ENCODE measurements at regions of chr6 and their contacts with region 1.

Region 1: GRCh38 chr6:32894080-32895005 is 40.4 kb downstream of the PSMB9 start:
- DNase-seq: peak; percentile 98
- ATAC-seq: peak; percentile 98
- H3K4me3 ChIP-seq: peak overlapping the region; percentile 84 to 96 (median 92)
- H3K4me3 Mint-ChIP-seq: peak overlapping the region; percentile 99
- H3K27ac ChIP-seq: peak overlapping the region; percentile 89 to 90
- H3K27ac Mint-ChIP-seq: peak overlapping the region; percentile 98
- H3K4me1 ChIP-seq: peaks cover 40 to 42% of the 10 kb centered on the region in 2 donors
- H3K4me1 Mint-ChIP-seq: peaks cover 60% of the 10 kb centered on the region
- H3K27me3 ChIP-seq: no peaks in the 10 kb centered on the region
- H3K27me3 Mint-ChIP-seq: no peaks in the 10 kb centered on the region
- CTCF ChIP-seq: no peak

Region 2: GRCh38 chr6:32576250-32576649 is 318.1 kb before region 1 on chr6:
- CTCF ChIA-PET with region 1: no interaction called
- POLR2A ChIA-PET with region 1: no interaction called
- intact Hi-C with region 1: no loop called
- DNase-seq: no peak
- ATAC-seq: no peak
- H3K4me3 ChIP-seq: no peak overlapping the region
- H3K4me3 Mint-ChIP-seq: no peak overlapping the region
- H3K27ac ChIP-seq: no peak overlapping the region
- H3K27ac Mint-ChIP-seq: peak overlapping the region; percentile 81
- H3K4me1 ChIP-seq: peaks cover 0 to 5% of the 10 kb centered on the region in 2 donors
- H3K4me1 Mint-ChIP-seq: peaks cover 23% of the 10 kb centered on the region
- H3K27me3 ChIP-seq: no peaks in the 10 kb centered on the region
- H3K27me3 Mint-ChIP-seq: no peaks in the 10 kb centered on the region
- CTCF ChIP-seq: no peak

Region 3: DNA sequence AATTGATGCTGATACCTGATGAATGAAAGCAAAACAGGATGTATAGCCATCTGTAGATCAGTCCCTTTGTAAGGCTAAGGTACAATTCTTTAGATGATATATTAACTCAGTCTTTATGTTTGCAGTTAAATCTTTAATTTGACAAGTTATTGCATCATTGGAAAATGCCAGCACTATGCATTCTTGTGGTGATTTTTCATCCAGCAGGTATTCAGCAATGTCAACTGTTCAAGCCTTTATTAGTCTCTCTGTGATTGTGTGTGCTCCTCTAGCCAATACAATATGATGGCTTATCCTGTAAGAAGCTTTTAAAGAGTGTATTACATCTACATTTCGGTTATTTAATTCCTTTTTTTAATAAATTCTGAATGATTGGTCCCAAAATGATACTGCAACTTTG is 12.2 kb after region 1 on chr6:
- CTCF ChIA-PET with region 1: interaction called, 10 read pairs
- POLR2A ChIA-PET with region 1: no interaction called
- intact Hi-C with region 1: no loop called
- DNase-seq: no peak
- ATAC-seq: no peak
- H3K4me3 ChIP-seq: no peak overlapping the region
- H3K4me3 Mint-ChIP-seq: no peak overlapping the region
- H3K27ac ChIP-seq: no peak overlapping the region
- H3K27ac Mint-ChIP-seq: no peak overlapping the region
- H3K4me1 ChIP-seq: peaks cover 0 to 6% of the 10 kb centered on the region in 2 donors
- H3K4me1 Mint-ChIP-seq: peaks cover 12% of the 10 kb centered on the region
- H3K27me3 ChIP-seq: no peaks in the 10 kb centered on the region
- H3K27me3 Mint-ChIP-seq: no peaks in the 10 kb centered on the region
- CTCF ChIP-seq: no peak

Region 4: DNA sequence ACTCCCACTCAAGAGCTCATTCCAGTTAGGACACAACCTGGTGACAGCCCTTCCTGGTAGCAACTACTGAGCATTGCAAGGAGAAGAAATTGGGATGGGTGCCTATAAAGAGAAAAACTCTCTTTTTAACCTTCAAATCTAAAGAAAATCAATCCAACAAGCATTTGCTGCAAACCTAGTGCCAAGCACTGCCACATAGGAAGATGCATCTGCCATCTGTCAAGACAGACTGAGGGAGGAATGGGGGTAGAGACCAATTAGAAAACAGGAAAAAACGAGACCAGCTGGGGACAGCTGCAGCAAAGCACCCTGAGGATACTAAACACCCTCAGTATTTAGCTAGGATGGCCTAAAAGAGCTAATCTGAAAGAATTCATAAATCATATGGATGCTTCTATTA is 18.6 kb after region 1 on chr6:
- CTCF ChIA-PET with region 1: interaction called, 6 read pairs
- POLR2A ChIA-PET with region 1: interaction called, 11 read pairs
- intact Hi-C with region 1: no loop called
- DNase-seq: no peak
- ATAC-seq: no peak
- H3K4me3 ChIP-seq: no peak overlapping the region
- H3K4me3 Mint-ChIP-seq: no peak overlapping the region
- H3K27ac ChIP-seq: no peak overlapping the region
- H3K27ac Mint-ChIP-seq: no peak overlapping the region
- H3K4me1 ChIP-seq: peaks cover 7 to 22% of the 10 kb centered on the region in 2 donors
- H3K4me1 Mint-ChIP-seq: peaks cover 26% of the 10 kb centered on the region
- H3K27me3 ChIP-seq: no peaks in the 10 kb centered on the region
- H3K27me3 Mint-ChIP-seq: no peaks in the 10 kb centered on the region
- CTCF ChIP-seq: no peak

Region 5: DNA sequence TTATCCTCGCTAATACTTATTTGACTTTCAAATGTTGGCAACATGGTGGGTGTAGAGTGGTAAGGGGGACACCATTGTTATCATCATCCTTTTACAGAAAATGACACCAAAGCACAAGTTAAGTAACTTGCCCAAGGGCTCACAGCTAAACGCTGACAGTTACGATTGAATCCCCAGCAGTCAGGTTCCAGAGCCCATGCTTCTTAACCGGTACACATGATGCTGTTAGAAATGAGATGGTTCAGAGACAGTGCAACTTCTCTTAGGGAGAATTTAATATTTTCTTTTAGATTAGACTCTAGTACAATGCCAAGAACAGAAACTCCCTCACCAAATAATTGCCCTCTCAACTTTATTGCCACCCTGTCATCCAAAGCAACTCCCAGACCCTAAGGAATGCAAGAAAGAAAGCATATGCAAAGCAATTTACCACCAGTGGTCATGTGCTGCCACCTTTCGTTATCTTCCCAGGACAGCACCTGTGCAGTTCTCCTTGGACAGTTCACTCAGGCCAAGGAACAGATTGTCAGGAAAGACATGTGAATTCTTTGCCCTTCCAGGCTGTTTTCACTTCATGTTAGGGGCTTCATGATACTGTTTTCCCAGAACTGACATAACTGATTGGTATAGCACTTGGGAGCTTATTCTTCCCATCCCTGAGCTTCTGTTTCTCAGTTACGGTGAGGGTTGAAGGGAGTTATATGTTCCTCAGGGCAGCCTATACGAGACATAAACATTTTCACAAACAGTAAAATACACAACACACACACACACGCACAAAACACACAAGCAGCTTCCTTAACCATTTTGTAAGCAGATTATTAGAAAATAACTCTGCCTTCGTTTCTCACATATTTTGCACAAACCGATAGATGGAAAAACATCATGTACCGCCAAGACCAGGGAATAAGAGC is 53.5 kb after region 1 on chr6:
- CTCF ChIA-PET with region 1: interaction called, 23 read pairs
- POLR2A ChIA-PET with region 1: interaction called, 40 read pairs
- intact Hi-C with region 1: loop called (anchors 1 kb)
- DNase-seq: peak; percentile 76
- ATAC-seq: no peak
- H3K4me3 ChIP-seq: peak overlapping the region in 3 of 5 experiments; percentile 2 to 35 (median 6)
- H3K4me3 Mint-ChIP-seq: peak overlapping the region; percentile 84
- H3K27ac ChIP-seq: peak overlapping the region; percentile 97 to 98
- H3K27ac Mint-ChIP-seq: peak overlapping the region; percentile 92
- H3K4me1 ChIP-seq: peaks cover 80 to 94% of the 10 kb centered on the region in 2 donors
- H3K4me1 Mint-ChIP-seq: peaks cover 86% of the 10 kb centered on the region
- H3K27me3 ChIP-seq: no peaks in the 10 kb centered on the region
- H3K27me3 Mint-ChIP-seq: no peaks in the 10 kb centered on the region
- CTCF ChIP-seq: peak; percentile 70

Region 6: GRCh38 chr6:32952817-32953739 is 58.7 kb after region 1 on chr6 and contains the start of gene HLA-DMA:
- CTCF ChIA-PET with region 1: interaction called, 23 read pairs
- POLR2A ChIA-PET with region 1: interaction called, 11 read pairs
- intact Hi-C with region 1: no loop called
- DNase-seq: peak; percentile 97
- ATAC-seq: peak; percentile 91
- H3K4me3 ChIP-seq: peak within 1 kb of the TSS; percentile 72 to 98 (median 93)
- H3K4me3 Mint-ChIP-seq: peak within 1 kb of the TSS; percentile 96
- H3K27ac ChIP-seq: peak within 1 kb of the TSS; percentile 91 to 92
- H3K27ac Mint-ChIP-seq: peak within 1 kb of the TSS; percentile 98
- H3K4me1 ChIP-seq: peaks cover 70 to 84% of the 10 kb centered on the region in 2 donors
- H3K4me1 Mint-ChIP-seq: peaks cover 85% of the 10 kb centered on the region
- H3K27me3 ChIP-seq: no peaks in the 10 kb centered on the region
- H3K27me3 Mint-ChIP-seq: no peaks in the 10 kb centered on the region
- CTCF ChIP-seq: peak; percentile 88
- total RNA-seq, gene HLA-DMA: 554 and 558 TPM in 2 replicates

Region 7: DNA sequence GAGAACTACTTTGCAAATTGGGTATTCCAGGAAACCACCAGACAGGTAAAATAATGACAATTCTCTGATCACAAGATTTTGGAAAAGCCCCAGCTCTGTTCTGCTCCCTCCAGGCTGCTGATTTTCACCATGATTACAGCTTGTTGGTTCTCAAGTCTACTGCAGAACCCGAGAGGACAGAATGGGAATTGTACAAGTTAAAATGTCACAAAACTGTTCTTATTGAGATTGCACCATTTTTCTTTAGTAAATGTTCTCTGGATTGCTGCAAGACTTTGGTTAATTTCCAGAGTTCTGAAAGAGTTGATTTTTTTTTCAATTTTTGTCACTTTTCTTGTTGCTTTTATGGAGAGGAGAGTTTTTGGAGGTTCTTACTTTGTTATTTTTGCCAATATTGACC is 142.2 kb after region 1 on chr6:
- CTCF ChIA-PET with region 1: no interaction called
- POLR2A ChIA-PET with region 1: no interaction called
- intact Hi-C with region 1: no loop called
- DNase-seq: no peak
- ATAC-seq: no peak
- H3K4me3 ChIP-seq: no peak overlapping the region
- H3K4me3 Mint-ChIP-seq: no peak overlapping the region
- H3K27ac ChIP-seq: no peak overlapping the region
- H3K27ac Mint-ChIP-seq: no peak overlapping the region
- H3K4me1 ChIP-seq: peaks cover 0 to 7% of the 10 kb centered on the region in 2 donors
- H3K4me1 Mint-ChIP-seq: peaks cover 16% of the 10 kb centered on the region
- H3K27me3 ChIP-seq: no peaks in the 10 kb centered on the region
- H3K27me3 Mint-ChIP-seq: no peaks in the 10 kb centered on the region
- CTCF ChIP-seq: no peak

Region 8: DNA sequence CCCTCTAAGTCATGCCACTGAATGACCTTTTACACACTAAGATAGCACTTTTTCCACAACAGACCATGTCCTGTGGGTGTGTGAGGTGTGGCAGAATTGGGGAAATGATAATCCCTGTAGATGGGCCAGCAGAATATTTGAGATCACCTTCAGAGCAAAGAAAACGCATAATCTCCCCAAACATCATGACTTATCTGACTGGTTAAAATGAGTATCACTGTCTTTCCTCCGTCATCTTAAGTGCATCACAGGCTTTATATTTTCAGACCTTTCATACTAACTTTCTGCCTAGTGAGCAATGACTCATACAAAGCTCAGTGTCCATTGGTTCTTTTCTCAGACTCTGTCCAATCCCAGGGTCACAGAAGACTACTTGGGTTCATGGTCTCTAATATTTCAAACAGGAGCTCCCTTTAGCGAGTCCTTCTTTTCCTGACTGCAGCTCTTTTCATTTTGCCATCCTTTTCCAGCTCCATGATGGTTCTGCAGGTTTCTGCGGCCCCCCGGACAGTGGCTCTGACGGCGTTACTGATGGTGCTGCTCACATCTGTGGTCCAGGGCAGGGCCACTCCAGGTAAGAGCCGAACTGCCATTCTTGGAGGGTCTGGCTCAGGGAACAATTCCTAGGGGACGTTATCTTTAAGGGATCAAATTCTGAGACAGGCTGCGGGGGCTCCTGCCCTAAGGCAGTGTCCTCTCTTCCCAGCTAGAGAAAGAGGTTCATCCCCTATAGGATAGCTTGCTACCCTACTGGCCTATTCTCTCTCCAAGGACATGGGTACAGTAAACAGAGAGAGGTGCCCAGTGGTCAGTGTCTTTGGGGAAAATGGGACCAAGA is 181.4 kb after region 1 on chr6 and contains the start of gene HLA-DPB1:
- CTCF ChIA-PET with region 1: no interaction called
- POLR2A ChIA-PET with region 1: no interaction called
- intact Hi-C with region 1: loop called (anchors 10 kb)
- DNase-seq: peak; percentile 93
- ATAC-seq: peak; percentile 81
- H3K4me3 ChIP-seq: peak within 1 kb of the TSS; percentile 79 to 99 (median 97)
- H3K4me3 Mint-ChIP-seq: peak within 1 kb of the TSS; percentile 97
- H3K27ac ChIP-seq: peak within 1 kb of the TSS; percentile 96 to 99
- H3K27ac Mint-ChIP-seq: peak within 1 kb of the TSS; percentile 98
- H3K4me1 ChIP-seq: peaks cover 48 to 50% of the 10 kb centered on the region in 2 donors
- H3K4me1 Mint-ChIP-seq: peaks cover 60% of the 10 kb centered on the region
- H3K27me3 ChIP-seq: no peaks in the 10 kb centered on the region
- H3K27me3 Mint-ChIP-seq: no peaks in the 10 kb centered on the region
- CTCF ChIP-seq: no peak
- total RNA-seq, gene HLA-DPB1: 1,068 and 1,104 TPM in 2 replicates

Measured in B cell (primary cell).